ENCODE measurements at regions of chr2 and their contacts with region 1.

Region 1: GRCh38 chr2:3151153-3151918 is 226.3 kb downstream of the EIPR1 start:
- DNase-seq: peak; percentile 95
- H3K4me3 ChIP-seq: peak overlapping the region; percentile 42
- H3K27ac ChIP-seq: peak overlapping the region; percentile 96
- H3K4me1 ChIP-seq: peaks cover 87% of the 10 kb centered on the region
- CTCF ChIP-seq: peak; percentile 33; the same call in 1 of the 2 replicates

Region 2: GRCh38 chr2:2328848-2329247 is 822.5 kb before region 1 on chr2:
- CTCF ChIA-PET with region 1: no interaction called
- POLR2A ChIA-PET with region 1: no interaction called
- intact Hi-C with region 1: no loop called
- DNase-seq: no peak
- H3K4me3 ChIP-seq: no peak overlapping the region
- H3K27ac ChIP-seq: no peak overlapping the region
- H3K4me1 ChIP-seq: no peaks in the 10 kb centered on the region
- CTCF ChIP-seq: no peak

Region 3: DNA sequence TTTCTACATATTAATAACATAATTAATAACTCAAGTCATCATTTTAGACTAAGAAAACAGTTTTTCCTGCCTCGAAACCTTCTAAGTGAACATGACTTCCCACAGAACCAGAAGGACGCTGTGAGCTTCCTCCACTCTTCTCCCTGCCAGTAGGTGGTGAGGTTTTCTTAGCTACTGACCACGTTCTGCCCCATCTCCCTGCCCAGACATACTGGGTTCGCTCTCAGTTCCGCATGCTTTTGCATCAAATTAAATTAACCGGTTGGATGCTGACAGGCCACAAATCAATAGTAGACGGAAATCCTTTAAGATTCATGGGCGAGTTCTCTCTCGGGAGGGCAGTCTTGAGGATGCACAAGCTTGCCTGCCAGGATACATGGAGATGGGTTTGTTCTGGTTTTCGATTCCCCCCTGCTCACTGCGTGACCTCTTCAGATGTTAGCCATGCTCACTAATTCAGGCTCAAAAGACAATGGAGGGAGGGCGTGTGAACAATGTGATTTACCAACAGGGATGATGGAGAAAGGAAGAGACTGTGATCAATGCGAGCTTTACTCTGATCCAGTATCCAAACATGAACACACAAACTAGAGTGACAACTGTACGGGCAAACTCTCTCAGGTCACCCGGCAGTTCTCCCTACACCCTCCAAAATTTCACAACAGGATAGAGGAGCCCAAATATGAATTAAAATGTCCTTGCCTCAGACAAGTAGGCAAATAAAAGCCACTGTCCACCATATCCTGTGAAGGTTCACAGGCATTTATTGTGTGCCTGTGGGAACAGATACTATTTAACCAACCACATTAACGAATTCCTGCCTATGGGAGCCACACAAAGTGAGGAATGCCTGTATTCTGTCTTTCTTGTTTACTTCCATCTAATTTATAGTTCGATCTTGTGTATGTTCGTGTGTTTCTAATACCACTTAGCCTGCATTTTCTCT is 149.4 kb before region 1 on chr2:
- CTCF ChIA-PET with region 1: interaction called, 3 read pairs
- POLR2A ChIA-PET with region 1: no interaction called
- intact Hi-C with region 1: loop called (anchors 1 kb)
- DNase-seq: peak; percentile 18
- H3K4me3 ChIP-seq: no peak overlapping the region
- H3K27ac ChIP-seq: no peak overlapping the region
- H3K4me1 ChIP-seq: no peaks in the 10 kb centered on the region
- CTCF ChIP-seq: peak; percentile 58

Region 4: GRCh38 chr2:3379647-3380534 is 228.6 kb after region 1 on chr2 and contains the start of gene TRAPPC12:
- CTCF ChIA-PET with region 1: no interaction called
- POLR2A ChIA-PET with region 1: no interaction called
- intact Hi-C with region 1: loop called (anchors 5 kb)
- DNase-seq: peak; percentile 95
- H3K4me3 ChIP-seq: peak within 1 kb of the TSS; percentile 96
- H3K27ac ChIP-seq: peak within 1 kb of the TSS; percentile 69
- H3K4me1 ChIP-seq: peaks cover 28% of the 10 kb centered on the region
- CTCF ChIP-seq: peak; percentile 75
- total RNA-seq, gene TRAPPC12: 67.0 and 91.6 TPM in 2 replicates

Region 5: DNA sequence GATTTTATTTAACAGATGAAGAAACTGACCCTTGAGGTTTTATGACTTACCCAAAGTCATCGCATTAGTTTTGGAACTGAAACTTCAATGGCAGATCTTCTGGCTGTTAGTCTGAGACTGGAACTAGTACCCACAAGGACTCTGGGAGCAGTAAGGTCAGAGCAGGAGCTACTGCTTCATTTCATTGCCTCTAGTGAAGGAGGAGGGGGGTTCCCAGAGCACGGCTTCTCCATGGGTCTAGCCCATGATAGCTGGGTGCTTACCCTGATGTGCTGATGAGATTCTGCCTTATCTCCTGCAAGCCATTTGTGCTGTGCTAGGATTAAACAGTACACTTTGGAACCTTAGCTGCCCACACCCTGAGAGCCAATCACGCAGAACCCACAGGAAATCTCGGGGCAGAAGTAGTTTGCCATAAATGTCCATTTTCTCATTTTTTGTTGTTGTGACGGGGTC is 412.2 kb after region 1 on chr2:
- CTCF ChIA-PET with region 1: no interaction called
- POLR2A ChIA-PET with region 1: no interaction called
- intact Hi-C with region 1: loop called (anchors 5 kb)
- DNase-seq: peak; percentile 22
- H3K4me3 ChIP-seq: peak overlapping the region; percentile 20
- H3K27ac ChIP-seq: peak overlapping the region; percentile 71
- H3K4me1 ChIP-seq: peaks cover 47% of the 10 kb centered on the region
- CTCF ChIP-seq: no peak

Measured in OCI-LY7 (cell line).